Aorta (tissue), 5 donors: ENCODE measurements at regions of chr11 and their contacts with region 1.

Region 1: GRCh38 chr11:130522284-130522961 is 74.0 kb downstream of the ADAMTS15 start:
- DNase-seq: peak; percentile 94 to 96
- ATAC-seq: peak; percentile 94
- H3K4me3 ChIP-seq: no peak overlapping the region
- H3K27ac ChIP-seq: peak overlapping the region in 1 of 2 donors; percentile 70
- H3K4me1 ChIP-seq: peaks cover 0 to 2% of the 10 kb centered on the region in 2 donors
- H3K27me3 ChIP-seq: no peaks in the 10 kb centered on the region

Region 2: GRCh38 chr11:130002846-130003716 is 519.3 kb before region 1 on chr11:
- intact Hi-C with region 1: no loop called
- DNase-seq: peak; percentile 96 to 97
- ATAC-seq: peak; percentile 96
- H3K4me3 ChIP-seq: peak overlapping the region; percentile 94 to 98
- H3K27ac ChIP-seq: peak overlapping the region; percentile 99
- H3K4me1 ChIP-seq: no peaks in the 10 kb centered on the region
- H3K27me3 ChIP-seq: no peaks in the 10 kb centered on the region

Region 3: GRCh38 chr11:130403271-130403804 is 119.1 kb before region 1 on chr11:
- intact Hi-C with region 1: no loop called
- DNase-seq: peak; percentile 89
- ATAC-seq: peak; percentile 84
- H3K4me3 ChIP-seq: no peak overlapping the region
- H3K27ac ChIP-seq: peak overlapping the region; percentile 94 to 96
- H3K4me1 ChIP-seq: peaks cover 0 to 4% of the 10 kb centered on the region in 2 donors
- H3K27me3 ChIP-seq: no peaks in the 10 kb centered on the region

Region 4: DNA sequence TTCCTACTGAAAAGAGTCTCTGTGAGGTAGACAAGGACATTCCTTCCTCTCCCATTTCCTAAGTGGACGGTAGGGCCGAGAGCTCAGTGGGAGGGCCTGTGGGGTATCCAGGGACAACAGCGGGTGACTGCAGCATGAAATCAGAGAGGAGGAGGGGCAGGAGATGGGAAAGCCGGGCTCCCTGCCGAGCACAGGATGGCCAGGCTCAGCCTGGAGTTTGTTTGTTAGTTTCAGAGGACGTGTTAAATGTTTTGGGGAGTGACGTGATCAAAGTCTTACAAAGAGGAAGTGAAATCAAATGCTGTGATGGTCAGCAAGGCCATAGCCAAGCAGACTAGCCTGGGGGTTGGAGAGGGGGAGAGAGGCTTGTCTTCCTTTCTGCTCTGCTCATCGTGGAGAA is 78.7 kb after region 1 on chr11:
- intact Hi-C with region 1: loop called in 1 of 2 experiments (anchors 10 kb)
- DNase-seq: peak in 1 of 2 donors; percentile 81
- ATAC-seq: peak; percentile 74
- H3K4me3 ChIP-seq: no peak overlapping the region
- H3K27ac ChIP-seq: no peak overlapping the region
- H3K4me1 ChIP-seq: no peaks in the 10 kb centered on the region
- H3K27me3 ChIP-seq: no peaks in the 10 kb centered on the region